CD4-positive, alpha-beta memory T cell (primary cell): ENCODE measurements at regions of chr1 and their contacts with region 1.

Region 1: GRCh38 chr1:169893494-169894362 is at the start of gene SCYL3:
- DNase-seq: peak; percentile 96 to 97 (median 96)
- H3K4me3 ChIP-seq: peak within 1 kb of the TSS; percentile 58 to 86
- H3K4me3 Mint-ChIP-seq: peak within 1 kb of the TSS; percentile 92 to 97 (median 94)
- H3K27ac ChIP-seq: peak within 1 kb of the TSS; percentile 98
- H3K27ac Mint-ChIP-seq: peak within 1 kb of the TSS; percentile 97 to 100 (median 100)
- H3K4me1 ChIP-seq: peaks cover 46% of the 10 kb centered on the region
- H3K4me1 Mint-ChIP-seq: peaks cover 35 to 51% (median 43%) of the 10 kb centered on the region in 4 donors
- H3K27me3 ChIP-seq: no peaks in the 10 kb centered on the region
- H3K27me3 Mint-ChIP-seq: peaks cover 0 to 2% of the 10 kb centered on the region in 2 donors
- total RNA-seq, gene SCYL3: 23.5 to 24.3 TPM

Region 2: GRCh38 chr1:168178638-168179437 is 1714.9 kb before region 1 on chr1 and contains the start of gene TIPRL:
- CTCF ChIA-PET with region 1: no interaction called
- POLR2A ChIA-PET with region 1: no interaction called
- intact Hi-C with region 1: loop called (anchors 2 kb)
- DNase-seq: peak; percentile 93 to 94 (median 94)
- H3K4me3 ChIP-seq: peak within 1 kb of the TSS; percentile 86 to 99
- H3K4me3 Mint-ChIP-seq: peak within 1 kb of the TSS in 2 of 8 donors; percentile 18 to 26
- H3K27ac ChIP-seq: peak within 1 kb of the TSS; percentile 95
- H3K27ac Mint-ChIP-seq: no peak within 1 kb of the TSS
- H3K4me1 ChIP-seq: peaks cover 24% of the 10 kb centered on the region
- H3K4me1 Mint-ChIP-seq: peaks cover 3 to 17% (median 9%) of the 10 kb centered on the region in 4 donors
- H3K27me3 ChIP-seq: no peaks in the 10 kb centered on the region
- H3K27me3 Mint-ChIP-seq: no peaks in the 10 kb centered on the region
- total RNA-seq, gene TIPRL: 23.8 to 28.3 TPM

Region 3: GRCh38 chr1:169367486-169368405 is 526.0 kb before region 1 on chr1 and contains the starts of genes BLZF1 and NME7:
- CTCF ChIA-PET with region 1: no interaction called
- POLR2A ChIA-PET with region 1: interaction called, 4 read pairs
- intact Hi-C with region 1: loop called (anchors 2 kb)
- DNase-seq: peak; percentile 95 to 99 (median 98)
- H3K4me3 ChIP-seq: peak within 1 kb of the TSS; percentile 96
- H3K4me3 Mint-ChIP-seq: peak within 1 kb of the TSS in 3 of 8 donors; percentile 16 to 51 (median 24)
- H3K27ac ChIP-seq: peak within 1 kb of the TSS; percentile 71
- H3K27ac Mint-ChIP-seq: peak within 1 kb of the TSS in 3 of 7 donors; percentile 25 to 54 (median 33)
- H3K4me1 ChIP-seq: peaks cover 44% of the 10 kb centered on the region
- H3K4me1 Mint-ChIP-seq: peaks cover 22 to 31% (median 23%) of the 10 kb centered on the region in 4 donors
- H3K27me3 ChIP-seq: no peaks in the 10 kb centered on the region
- H3K27me3 Mint-ChIP-seq: no peaks in the 10 kb centered on the region
- total RNA-seq, gene BLZF1: 20.0 to 23.8 TPM
- total RNA-seq, gene NME7: 12.0 to 14.3 TPM

Region 4: DNA sequence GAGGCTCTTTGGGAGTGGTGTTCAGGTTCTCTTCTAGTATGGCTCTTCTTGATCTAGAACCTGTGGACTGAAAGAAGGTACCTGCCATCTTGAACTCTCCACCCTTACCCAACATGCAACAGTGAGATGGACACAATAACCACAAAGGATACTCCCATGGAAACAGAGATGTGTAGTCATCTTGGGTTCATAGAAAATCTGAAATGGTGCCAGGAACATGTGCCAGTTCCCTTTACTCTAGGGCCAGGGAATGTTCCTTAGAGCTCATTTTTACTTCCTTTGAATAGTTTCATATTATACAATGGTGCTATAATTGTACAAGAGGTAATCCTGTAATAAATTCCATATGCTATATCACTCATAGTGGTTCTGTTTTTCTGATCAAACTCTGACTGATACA is 13.2 kb after region 1 on chr1:
- CTCF ChIA-PET with region 1: interaction called, 6 read pairs
- POLR2A ChIA-PET with region 1: interaction called, 59 read pairs
- intact Hi-C with region 1: loop called (anchors 2 kb)
- DNase-seq: no peak
- H3K4me3 ChIP-seq: no peak overlapping the region
- H3K4me3 Mint-ChIP-seq: no peak overlapping the region
- H3K27ac ChIP-seq: no peak overlapping the region
- H3K27ac Mint-ChIP-seq: no peak overlapping the region
- H3K4me1 ChIP-seq: peaks cover 36% of the 10 kb centered on the region
- H3K4me1 Mint-ChIP-seq: peaks cover 17 to 48% (median 31%) of the 10 kb centered on the region in 4 donors
- H3K27me3 ChIP-seq: no peaks in the 10 kb centered on the region
- H3K27me3 Mint-ChIP-seq: peaks cover 0 to 2% of the 10 kb centered on the region in 2 donors

Region 5: DNA sequence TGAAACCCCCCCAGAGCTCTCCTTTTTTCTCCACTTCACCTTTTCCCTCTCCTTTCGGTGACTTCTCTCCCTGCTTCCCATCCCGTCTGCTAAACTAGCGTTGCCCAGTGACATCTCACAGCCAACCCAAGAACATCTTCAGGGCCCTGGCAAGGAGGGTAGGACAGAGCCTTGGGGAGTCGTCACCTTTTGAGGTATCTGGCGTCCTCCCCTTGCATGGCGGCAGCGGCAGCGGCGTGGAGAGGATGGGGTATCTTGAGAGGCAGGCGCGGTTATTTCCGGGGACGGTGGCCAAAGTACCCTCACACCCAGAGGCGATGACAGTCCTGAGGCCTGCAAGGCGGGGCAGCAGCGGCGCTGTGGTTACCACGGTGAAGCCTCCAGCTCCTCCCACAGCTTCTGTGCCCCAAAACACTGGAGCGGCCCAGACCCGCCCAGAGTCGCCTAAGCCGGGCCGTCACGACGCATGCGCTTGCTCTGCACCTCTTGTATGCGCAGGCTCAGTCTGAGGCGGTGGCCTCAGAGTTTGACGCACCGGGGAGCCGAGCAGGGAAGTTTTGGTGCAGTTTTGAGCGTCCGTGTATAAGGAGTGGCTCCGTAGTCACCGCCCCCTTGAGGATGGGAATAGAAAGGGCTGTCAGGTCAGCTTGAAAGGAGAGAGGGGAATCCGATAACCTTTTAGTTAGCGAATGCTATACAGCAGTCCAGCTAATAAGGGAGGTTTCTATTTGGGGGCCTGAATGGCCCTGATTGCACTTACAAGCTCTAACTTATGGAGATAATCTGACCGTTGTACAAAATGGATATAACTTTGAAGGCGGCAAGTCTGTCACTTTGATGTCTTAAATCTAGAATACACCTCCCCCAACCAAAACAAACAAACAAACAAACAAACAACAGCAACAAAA is 180.8 kb after region 1 on chr1 and contains the start of gene KIFAP3:
- CTCF ChIA-PET with region 1: interaction called, 7 read pairs
- POLR2A ChIA-PET with region 1: interaction called, 26 read pairs
- intact Hi-C with region 1: loop called (anchors 1 kb)
- DNase-seq: peak; percentile 93 to 97 (median 95)
- H3K4me3 ChIP-seq: peak within 1 kb of the TSS; percentile 71 to 77
- H3K4me3 Mint-ChIP-seq: peak within 1 kb of the TSS; percentile 90 to 98 (median 96)
- H3K27ac ChIP-seq: peak within 1 kb of the TSS; percentile 74
- H3K27ac Mint-ChIP-seq: peak within 1 kb of the TSS; percentile 85 to 99 (median 97)
- H3K4me1 ChIP-seq: peaks cover 44% of the 10 kb centered on the region
- H3K4me1 Mint-ChIP-seq: peaks cover 39 to 61% (median 47%) of the 10 kb centered on the region in 4 donors
- H3K27me3 ChIP-seq: no peaks in the 10 kb centered on the region
- H3K27me3 Mint-ChIP-seq: peaks cover 0 to 2% of the 10 kb centered on the region in 2 donors
- total RNA-seq, gene KIFAP3: 20.2 to 22.2 TPM

Region 6: GRCh38 chr1:171781176-171781875 is 1887.6 kb after region 1 on chr1 and contains the start of gene METTL13:
- CTCF ChIA-PET with region 1: no interaction called
- POLR2A ChIA-PET with region 1: interaction called, 3 read pairs
- intact Hi-C with region 1: loop called (anchors 10 kb)
- DNase-seq: peak; percentile 98 to 100 (median 99)
- H3K4me3 ChIP-seq: peak within 1 kb of the TSS; percentile 92 to 99
- H3K4me3 Mint-ChIP-seq: peak within 1 kb of the TSS; percentile 94 to 100 (median 96)
- H3K27ac ChIP-seq: peak within 1 kb of the TSS; percentile 71
- H3K27ac Mint-ChIP-seq: peak within 1 kb of the TSS; percentile 86 to 99 (median 98)
- H3K4me1 ChIP-seq: peaks cover 53% of the 10 kb centered on the region
- H3K4me1 Mint-ChIP-seq: peaks cover 37 to 67% (median 48%) of the 10 kb centered on the region in 4 donors
- H3K27me3 ChIP-seq: no peaks in the 10 kb centered on the region
- H3K27me3 Mint-ChIP-seq: no peaks in the 10 kb centered on the region
- total RNA-seq, gene METTL13: 33.3 to 36.7 TPM